ENCODE measurements at regions of chr14 and their contacts with region 1.

Region 1: GRCh38 chr14:23539248-23540140 is 12.1 kb downstream of the ZFHX2 start:
- DNase-seq: peak; percentile 14
- H3K4me3 Mint-ChIP-seq: no peak overlapping the region
- H3K27ac Mint-ChIP-seq: no peak overlapping the region
- H3K4me1 Mint-ChIP-seq: no peaks in the 10 kb centered on the region
- H3K27me3 Mint-ChIP-seq: peaks cover 7% of the 10 kb centered on the region

Region 2: DNA sequence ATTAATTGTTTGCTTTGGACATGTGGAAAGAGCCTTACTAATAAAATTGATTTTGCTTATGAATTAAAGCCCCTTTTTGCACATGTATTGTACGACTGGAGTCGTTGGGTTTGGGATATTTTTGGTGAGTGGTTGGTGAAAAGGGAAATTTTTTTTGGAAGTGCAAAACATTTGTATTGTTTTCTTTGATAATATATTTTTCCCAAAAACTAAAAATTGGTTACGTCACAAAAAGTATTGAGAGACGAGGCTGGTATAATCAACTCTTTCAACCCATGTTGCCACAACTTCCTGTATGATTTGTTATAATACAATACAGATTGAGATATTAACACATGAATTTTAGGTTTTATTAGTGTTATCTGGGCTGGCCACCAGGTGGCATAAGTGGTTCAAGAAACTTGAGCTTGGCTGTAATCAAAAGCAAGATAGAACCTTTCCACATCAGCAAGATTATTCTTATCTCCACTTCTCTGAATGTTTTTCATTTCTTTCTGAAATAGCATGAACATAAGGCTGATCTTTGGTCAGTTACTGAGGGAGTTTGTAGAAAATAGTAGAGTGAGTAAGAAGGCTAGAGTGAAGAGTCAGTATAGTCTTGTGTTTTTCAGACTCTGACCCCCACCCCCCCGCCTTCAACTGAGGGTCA is 61.3 kb before region 1 on chr14:
- intact Hi-C with region 1: loop called (anchors 1 kb)
- DNase-seq: peak; percentile 44
- H3K4me3 Mint-ChIP-seq: no peak overlapping the region
- H3K27ac Mint-ChIP-seq: peak overlapping the region; percentile 62
- H3K4me1 Mint-ChIP-seq: peaks cover 4% of the 10 kb centered on the region
- H3K27me3 Mint-ChIP-seq: no peaks in the 10 kb centered on the region

Region 3: DNA sequence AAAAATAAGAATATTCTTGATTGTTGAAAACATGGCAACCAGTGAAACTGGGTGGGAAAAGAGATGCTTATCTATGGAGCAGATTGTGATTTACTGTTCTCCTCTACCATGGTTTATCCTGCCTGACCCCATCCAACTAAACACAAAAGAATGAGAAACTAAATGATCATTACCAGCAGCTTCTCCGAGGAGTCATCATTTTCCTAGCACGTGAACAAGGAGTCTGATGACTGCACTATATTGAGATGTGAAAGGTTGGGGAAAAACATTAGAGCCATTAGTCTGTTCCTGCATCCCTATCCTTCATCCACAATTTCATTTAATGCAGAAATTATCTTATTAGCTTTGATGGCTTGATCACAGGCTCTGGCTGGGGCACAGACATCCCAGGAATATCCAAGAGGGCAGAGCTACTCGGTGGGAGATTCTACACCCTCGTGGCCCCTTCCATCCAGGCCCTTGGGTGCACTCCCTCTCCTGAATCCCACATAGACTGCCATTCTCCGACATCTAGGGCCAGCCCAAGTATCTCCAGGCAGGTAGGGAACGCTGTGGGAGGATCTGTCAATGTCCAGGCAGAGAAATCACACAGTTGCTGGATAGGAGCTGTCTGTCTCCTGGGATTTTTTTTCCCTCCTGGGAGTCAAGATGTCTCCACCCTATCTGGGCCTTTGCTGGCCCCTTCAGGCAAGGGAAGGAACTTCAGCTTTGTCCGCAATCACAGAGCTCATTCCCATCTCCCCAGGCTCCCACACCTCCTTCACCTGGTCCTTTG is 370.8 kb after region 1 on chr14:
- intact Hi-C with region 1: no loop called
- DNase-seq: no peak
- H3K4me3 Mint-ChIP-seq: no peak overlapping the region
- H3K27ac Mint-ChIP-seq: no peak overlapping the region
- H3K4me1 Mint-ChIP-seq: no peaks in the 10 kb centered on the region
- H3K27me3 Mint-ChIP-seq: peaks cover 9% of the 10 kb centered on the region